ENCODE measurements at regions of chr3 and their contacts with region 1.

Region 1: GRCh38 chr3:150787741-150788370 is 24.9 kb upstream of the SIAH2 start:
- DNase-seq: peak; percentile 87
- H3K4me3 ChIP-seq: no peak overlapping the region
- H3K27ac ChIP-seq: no peak overlapping the region
- H3K4me1 ChIP-seq: no peaks in the 10 kb centered on the region
- H3K27me3 ChIP-seq: peaks cover 7% of the 10 kb centered on the region
- CTCF ChIP-seq: peak; percentile 83 to 93 (median 90)
- EP300 ChIP-seq: no peak
- POLR2A ChIP-seq: no peak

Region 2: GRCh38 chr3:150721285-150722130 is 66.3 kb before region 1 on chr3:
- in situ Hi-C with region 1: loop called in 3 of 4 experiments (anchors 10 kb)
- intact Hi-C with region 1: no loop called
- DNase-seq: no peak
- H3K4me3 ChIP-seq: no peak overlapping the region
- H3K27ac ChIP-seq: no peak overlapping the region
- H3K4me1 ChIP-seq: peaks cover 0 to 16% (median 7%) of the 10 kb centered on the region in 4 donors
- H3K27me3 ChIP-seq: no peaks in the 10 kb centered on the region
- CTCF ChIP-seq: peak; percentile 82 to 93 (median 87)
- EP300 ChIP-seq: no peak
- POLR2A ChIP-seq: no peak

Region 3: DNA sequence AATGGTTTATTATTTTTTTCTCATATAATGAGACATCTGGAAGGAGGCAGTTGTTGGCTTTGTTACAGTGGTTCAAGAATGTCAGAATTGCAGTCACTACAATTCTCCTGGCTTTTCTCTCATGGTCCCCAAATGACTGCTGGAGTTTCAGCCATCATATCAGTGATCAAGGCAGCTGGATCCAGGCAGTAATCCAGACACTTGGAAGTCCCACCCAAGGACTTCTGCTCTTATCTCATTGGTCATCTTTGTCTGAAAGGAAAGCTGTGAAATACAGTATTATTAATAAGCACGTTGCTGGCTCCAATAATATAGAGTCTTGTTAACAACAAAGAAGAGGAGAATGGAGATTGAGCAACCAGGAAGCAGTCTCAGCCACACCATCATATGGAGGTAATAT is 274.8 kb after region 1 on chr3:
- in situ Hi-C with region 1: no loop called
- intact Hi-C with region 1: no loop called
- DNase-seq: no peak
- H3K4me3 ChIP-seq: no peak overlapping the region
- H3K27ac ChIP-seq: no peak overlapping the region
- H3K4me1 ChIP-seq: no peaks in the 10 kb centered on the region
- H3K27me3 ChIP-seq: no peaks in the 10 kb centered on the region
- CTCF ChIP-seq: no peak
- EP300 ChIP-seq: no peak
- POLR2A ChIP-seq: no peak

Region 4: GRCh38 chr3:151152455-151153079 is 364.7 kb after region 1 on chr3:
- in situ Hi-C with region 1: loop called in 3 of 4 experiments (anchors 5 to 25 kb)
- intact Hi-C with region 1: loop called (anchors 5 kb)
- DNase-seq: no peak
- H3K4me3 ChIP-seq: no peak overlapping the region
- H3K27ac ChIP-seq: no peak overlapping the region
- H3K4me1 ChIP-seq: no peaks in the 10 kb centered on the region
- H3K27me3 ChIP-seq: no peaks in the 10 kb centered on the region
- CTCF ChIP-seq: no peak
- EP300 ChIP-seq: no peak
- POLR2A ChIP-seq: no peak

Measured in transverse colon (tissue), 4 donors.